Endothelial cell of umbilical vein (primary cell): ENCODE measurements at regions of chr11 and their contacts with region 1.

Region 1: DNA sequence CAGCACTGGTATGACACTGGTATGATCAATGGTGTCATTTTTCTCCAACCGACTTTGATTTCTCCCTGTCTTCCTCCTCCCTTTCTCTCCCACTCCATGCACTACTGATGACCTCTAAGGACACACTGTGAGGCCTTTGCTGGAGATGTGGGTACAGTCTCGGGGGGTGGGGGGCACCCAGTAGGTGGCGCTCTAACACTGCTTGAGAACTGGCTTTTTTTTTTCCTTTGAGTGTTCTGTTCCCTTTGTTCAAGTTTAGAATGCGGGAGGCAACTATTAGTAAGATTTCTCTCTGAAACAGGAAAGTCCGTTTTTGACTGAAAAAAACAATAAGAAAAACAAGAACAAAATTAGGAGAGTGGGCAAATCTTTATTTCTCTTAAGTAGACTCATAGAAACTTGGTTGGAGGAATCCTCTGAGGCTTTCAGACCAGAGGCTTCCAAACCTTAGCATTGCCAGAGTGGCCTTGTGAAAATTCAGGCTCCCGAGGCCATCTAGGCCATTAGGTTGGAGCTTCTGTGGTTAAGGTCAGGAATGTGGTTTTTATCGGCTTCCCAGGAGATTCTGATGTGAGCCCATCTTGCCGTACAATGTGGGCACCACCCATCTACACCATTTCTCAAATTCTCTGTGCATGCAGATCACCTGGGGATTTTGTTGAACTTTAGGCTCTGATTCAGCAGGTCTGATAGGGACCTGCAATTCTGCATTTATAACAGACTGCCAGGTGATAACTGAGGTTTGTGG is 43.2 kb downstream of the PANX1 start:
- DNase-seq: peak; percentile 52
- H3K4me3 ChIP-seq: no peak overlapping the region
- H3K27ac ChIP-seq: no peak overlapping the region
- H3K4me1 ChIP-seq: no peaks in the 10 kb centered on the region
- H3K27me3 ChIP-seq: no peaks in the 10 kb centered on the region
- CTCF ChIP-seq: peak; percentile 77 to 81
- POLR2A ChIP-seq: no peak

Region 2: DNA sequence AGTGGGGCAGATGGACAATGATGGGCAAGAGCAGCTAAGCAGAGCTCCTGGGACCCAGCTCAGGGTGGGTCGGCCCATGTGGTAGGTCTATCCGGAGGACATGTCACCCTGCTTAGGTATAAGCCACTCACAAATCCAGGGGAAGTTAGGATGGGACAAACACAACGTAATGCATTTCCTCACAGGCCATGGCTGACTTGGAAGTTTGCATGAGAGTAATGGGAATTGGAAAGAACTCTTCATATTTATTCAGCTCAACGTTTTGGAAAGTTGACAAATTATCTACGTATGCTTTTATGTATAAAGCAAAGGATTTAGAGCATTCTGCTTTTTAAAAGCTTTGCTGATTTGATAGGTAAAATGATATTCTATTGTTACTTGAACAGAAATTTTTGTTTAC is 703.6 kb before region 1 on chr11:
- CTCF ChIA-PET with region 1: no interaction called
- POLR2A ChIA-PET with region 1: no interaction called
- dilution Hi-C with region 1: no loop called
- intact Hi-C with region 1: no loop called
- DNase-seq: no peak
- H3K4me3 ChIP-seq: no peak overlapping the region
- H3K27ac ChIP-seq: no peak overlapping the region
- H3K4me1 ChIP-seq: no peaks in the 10 kb centered on the region
- H3K27me3 ChIP-seq: no peaks in the 10 kb centered on the region
- CTCF ChIP-seq: no peak
- POLR2A ChIP-seq: no peak

Region 3: DNA sequence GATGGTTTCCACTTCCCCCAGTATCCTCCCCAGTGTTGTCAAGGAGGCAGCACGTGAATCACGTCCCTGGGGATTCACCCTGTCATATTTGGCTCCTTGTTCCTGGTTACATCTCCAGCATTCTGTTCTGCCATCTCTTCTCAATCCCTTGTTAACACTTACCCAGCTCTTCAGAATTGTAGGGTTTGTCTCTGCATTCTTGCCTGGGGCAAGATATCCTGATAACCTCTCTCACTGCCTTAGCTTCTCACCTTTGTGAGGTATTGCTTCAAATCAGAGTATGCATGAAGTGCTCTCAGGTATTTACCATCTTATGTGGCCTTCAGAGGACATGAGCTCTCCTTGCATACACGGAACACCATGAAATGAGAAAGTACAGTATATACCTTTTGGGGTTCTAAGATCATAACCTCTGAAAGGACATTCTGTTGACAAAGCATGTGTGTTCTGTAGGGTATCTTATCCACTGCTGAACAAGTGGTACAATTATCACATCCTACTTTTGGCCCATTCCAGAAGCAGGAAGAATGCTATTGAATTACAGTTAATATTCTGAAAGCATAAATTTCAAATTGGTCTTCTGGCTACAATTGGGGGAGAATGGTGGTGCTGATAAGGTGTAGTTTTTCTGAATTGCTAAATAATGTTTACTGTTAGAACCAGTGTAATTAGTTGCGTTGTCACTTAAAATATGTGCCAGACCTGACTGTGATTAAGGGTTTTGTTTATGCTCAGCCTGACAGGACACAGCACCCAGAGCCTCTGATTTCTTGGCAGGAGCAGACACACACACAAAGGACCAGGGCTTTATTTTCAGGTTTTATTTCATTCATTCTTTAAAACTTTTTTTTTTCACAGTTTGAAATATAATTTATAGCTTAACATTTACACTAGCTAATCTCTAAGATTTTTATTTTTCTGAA is 354.2 kb before region 1 on chr11:
- CTCF ChIA-PET with region 1: no interaction called
- POLR2A ChIA-PET with region 1: no interaction called
- dilution Hi-C with region 1: no loop called
- intact Hi-C with region 1: no loop called
- DNase-seq: no peak
- H3K4me3 ChIP-seq: no peak overlapping the region
- H3K27ac ChIP-seq: no peak overlapping the region
- H3K4me1 ChIP-seq: no peaks in the 10 kb centered on the region
- H3K27me3 ChIP-seq: no peaks in the 10 kb centered on the region
- CTCF ChIP-seq: no peak
- POLR2A ChIP-seq: no peak

Region 4: DNA sequence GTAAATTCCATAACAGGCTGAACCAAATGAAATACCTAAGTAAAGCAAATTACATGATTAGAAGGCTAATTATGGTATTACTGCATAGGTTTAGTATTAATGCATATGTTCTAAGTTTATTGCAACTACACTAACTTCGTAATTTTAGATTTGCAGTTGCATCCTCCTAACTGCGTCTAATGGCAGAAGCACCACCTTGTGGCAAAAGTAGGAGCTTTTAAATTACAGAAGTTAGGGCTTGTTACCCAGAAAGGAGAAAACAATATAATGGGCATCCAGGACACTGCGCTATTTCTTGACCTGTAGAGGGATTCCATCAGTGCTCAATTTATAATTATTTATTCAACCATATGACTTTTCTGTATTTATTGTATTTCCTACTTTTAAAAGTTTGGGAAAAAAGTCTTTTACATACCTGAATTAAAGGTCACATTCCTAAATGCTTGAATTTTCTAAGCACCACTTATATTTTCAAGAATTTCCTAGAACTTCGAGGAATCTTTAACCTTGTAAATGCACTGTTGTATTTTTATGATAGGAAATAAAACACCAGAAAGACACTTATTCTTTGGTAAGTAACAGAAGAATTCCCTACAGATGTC is 245.6 kb after region 1 on chr11:
- CTCF ChIA-PET with region 1: interaction called, 12 read pairs
- POLR2A ChIA-PET with region 1: no interaction called
- dilution Hi-C with region 1: no loop called
- intact Hi-C with region 1: loop called (anchors 2 kb)
- DNase-seq: peak; percentile 32
- H3K4me3 ChIP-seq: no peak overlapping the region
- H3K27ac ChIP-seq: no peak overlapping the region
- H3K4me1 ChIP-seq: no peaks in the 10 kb centered on the region
- H3K27me3 ChIP-seq: no peaks in the 10 kb centered on the region
- CTCF ChIP-seq: peak; percentile 15 to 24
- POLR2A ChIP-seq: no peak